Activated CD8-positive, alpha-beta memory T cell treated with anti-CD3 and anti-CD28 coated beads, Interleukin-2, amount 10 ng/mL, durations not matched to agents 7 days and 5 days (primary cell): ENCODE measurements at regions of chr17 and their contacts with region 1.

Region 1: DNA sequence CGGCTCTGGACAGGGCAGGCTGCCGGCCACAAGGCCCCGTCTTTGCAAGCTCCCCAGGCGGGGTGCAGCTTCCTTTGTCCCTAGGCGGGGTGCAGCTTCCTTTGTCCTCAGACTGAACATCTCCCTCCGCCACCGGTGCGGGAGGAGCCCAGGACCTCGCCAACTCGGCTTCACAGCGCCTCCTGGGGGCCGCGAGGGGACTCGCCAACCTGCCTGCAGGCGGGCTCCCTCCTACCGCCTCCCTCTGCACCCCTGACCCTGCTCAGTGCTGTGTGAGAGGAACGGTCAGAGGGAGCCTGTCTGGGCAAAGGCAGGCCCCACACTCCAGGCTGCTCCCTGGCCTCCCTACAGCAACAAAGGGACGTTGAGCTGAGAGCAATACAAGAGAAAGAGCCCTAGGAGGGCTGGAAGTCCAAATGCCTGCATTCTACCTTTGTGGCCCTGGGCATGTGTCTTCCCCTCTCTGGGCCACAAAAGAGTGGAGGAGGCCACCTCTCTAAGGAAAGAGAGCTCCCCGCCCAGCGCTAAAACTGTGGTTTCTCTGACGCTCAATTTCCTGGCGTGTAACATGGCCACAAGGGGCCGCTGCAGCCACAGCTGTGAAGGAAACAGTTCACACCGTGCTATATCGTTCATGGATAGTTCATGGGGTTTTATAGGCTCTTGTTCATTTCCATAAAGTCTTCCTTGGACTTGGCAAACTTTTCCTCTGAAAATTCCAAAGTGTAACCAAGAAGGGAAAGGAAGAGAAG is 20.9 kb upstream of the KRT19 start:
- DNase-seq: peak; percentile 91
- ATAC-seq: peak; percentile 86
- H3K4me3 Mint-ChIP-seq: no peak overlapping the region
- H3K27ac Mint-ChIP-seq: peak overlapping the region; percentile 47
- H3K4me1 Mint-ChIP-seq: peaks cover 17% of the 10 kb centered on the region
- H3K27me3 Mint-ChIP-seq: peaks cover 7% of the 10 kb centered on the region

Region 2: GRCh38 chr17:40909351-40909750 is 639.7 kb before region 1 on chr17:
- CTCF ChIA-PET with region 1: interaction called, 20 read pairs
- DNase-seq: peak; percentile 70
- ATAC-seq: peak; percentile 83
- H3K4me3 Mint-ChIP-seq: no peak overlapping the region
- H3K27ac Mint-ChIP-seq: no peak overlapping the region
- H3K4me1 Mint-ChIP-seq: no peaks in the 10 kb centered on the region
- H3K27me3 Mint-ChIP-seq: peaks cover 49% of the 10 kb centered on the region

Region 3: DNA sequence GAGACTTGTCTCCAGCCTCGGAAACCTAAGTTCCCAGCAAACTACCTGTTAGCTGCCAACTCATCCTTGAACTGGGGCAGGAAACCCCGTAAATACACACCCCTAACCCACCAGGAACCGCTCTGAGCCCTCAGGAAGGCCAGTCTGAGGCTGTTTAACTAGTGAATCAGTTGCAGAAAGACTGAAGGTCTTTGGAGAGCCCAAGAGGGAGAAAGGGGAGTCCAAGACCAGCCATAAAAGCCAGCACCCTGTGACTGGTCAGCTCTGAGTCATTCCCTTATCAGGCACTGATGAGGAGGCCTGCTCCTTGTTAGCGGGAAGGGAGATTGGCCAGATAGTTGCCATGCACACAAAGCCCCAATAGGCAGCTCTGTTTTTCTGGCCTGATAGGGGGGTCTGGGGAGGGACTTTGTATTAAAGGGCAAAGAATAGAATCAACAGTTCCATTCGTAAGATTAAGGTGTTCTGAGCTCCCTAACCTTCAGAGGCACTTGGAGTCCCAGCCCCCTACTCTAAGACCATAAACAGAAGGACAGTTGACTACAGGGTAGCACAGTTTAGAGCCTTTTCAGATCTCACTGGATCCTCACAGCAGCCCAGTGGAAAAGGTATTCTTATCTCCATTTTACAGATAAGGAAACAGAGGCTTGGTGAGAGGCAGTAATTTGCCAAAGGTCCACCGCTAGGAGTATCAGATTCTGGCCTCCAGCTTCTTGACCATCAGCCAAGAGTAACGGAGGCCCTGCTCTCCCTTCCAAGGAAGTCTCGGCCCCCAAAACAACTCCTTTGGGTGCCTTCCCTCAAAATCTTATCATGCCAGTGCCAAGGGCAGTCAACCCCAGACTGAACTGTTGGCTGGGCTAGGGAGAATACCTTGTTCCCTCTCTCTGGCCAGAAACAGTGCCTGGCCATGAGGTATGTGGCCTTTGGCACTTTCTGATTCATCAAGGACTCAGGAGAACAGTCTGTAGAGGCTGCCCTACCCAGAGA is 18.7 kb before region 1 on chr17:
- CTCF ChIA-PET with region 1: interaction called, 23 read pairs
- DNase-seq: no peak
- ATAC-seq: no peak
- H3K4me3 Mint-ChIP-seq: no peak overlapping the region
- H3K27ac Mint-ChIP-seq: no peak overlapping the region
- H3K4me1 Mint-ChIP-seq: no peaks in the 10 kb centered on the region
- H3K27me3 Mint-ChIP-seq: peaks cover 71% of the 10 kb centered on the region

Region 4: GRCh38 chr17:41567317-41567716 is 18.3 kb after region 1 on chr17:
- CTCF ChIA-PET with region 1: interaction called, 48 read pairs
- DNase-seq: no peak
- ATAC-seq: no peak
- H3K4me3 Mint-ChIP-seq: no peak overlapping the region
- H3K27ac Mint-ChIP-seq: peak overlapping the region; percentile 76
- H3K4me1 Mint-ChIP-seq: peaks cover 5% of the 10 kb centered on the region
- H3K27me3 Mint-ChIP-seq: peaks cover 35% of the 10 kb centered on the region

Region 5: GRCh38 chr17:41655611-41656351 is 106.8 kb after region 1 on chr17:
- CTCF ChIA-PET with region 1: interaction called, 256 read pairs
- DNase-seq: no peak
- ATAC-seq: no peak
- H3K4me3 Mint-ChIP-seq: no peak overlapping the region
- H3K27ac Mint-ChIP-seq: no peak overlapping the region
- H3K4me1 Mint-ChIP-seq: no peaks in the 10 kb centered on the region
- H3K27me3 Mint-ChIP-seq: no peaks in the 10 kb centered on the region